ENCODE measurements at regions of chr5 and their contacts with region 1.

Region 1: DNA sequence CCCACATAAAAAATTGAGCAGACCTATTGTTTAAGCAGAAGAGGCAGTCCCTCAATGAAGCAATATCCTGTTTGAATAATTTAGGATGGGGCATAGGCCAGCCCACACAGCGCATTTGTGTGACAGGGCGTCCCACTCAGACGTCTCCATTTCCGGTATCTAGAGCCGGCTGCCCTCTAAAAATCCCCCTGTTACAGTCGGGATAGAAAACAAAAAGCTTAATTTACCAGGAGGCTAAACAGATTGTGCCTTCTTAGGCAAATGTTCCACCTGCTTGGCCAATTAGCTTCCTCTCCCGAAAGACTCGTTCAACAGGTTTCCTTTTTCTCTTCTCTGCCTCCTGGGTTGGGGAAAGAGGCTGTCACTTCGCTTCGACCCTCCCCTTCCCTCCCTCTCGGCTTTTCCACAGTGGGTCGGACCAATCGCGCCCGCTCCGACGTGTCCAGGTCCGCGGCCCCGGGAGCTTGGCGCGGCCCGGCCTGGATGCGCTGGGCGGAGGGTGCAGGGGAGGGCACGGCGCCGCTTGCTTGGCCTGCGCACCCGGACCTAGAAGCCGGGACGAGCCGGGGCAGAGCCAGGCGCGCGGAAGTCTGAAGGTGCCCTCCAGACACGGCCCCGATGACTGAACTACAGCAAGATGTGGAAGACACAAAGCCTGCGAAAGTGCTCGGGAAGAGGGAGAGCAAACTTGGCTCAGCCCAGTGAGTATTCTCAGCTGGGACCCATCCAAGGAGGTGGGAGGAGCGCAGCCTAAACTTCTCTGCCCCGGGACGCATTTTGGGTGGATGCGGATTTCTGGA is at the start of gene GRAMD2B:
- DNase-seq: peak; percentile 27 to 80 (median 76)
- ATAC-seq: peak; percentile 96
- H3K4me3 ChIP-seq: peak within 1 kb of the TSS; percentile 78
- H3K4me3 Mint-ChIP-seq: peak within 1 kb of the TSS; percentile 85 to 94 (median 94)
- H3K27ac ChIP-seq: peak within 1 kb of the TSS; percentile 100
- H3K27ac Mint-ChIP-seq: peak within 1 kb of the TSS; percentile 85 to 96 (median 95)
- H3K4me1 ChIP-seq: peaks cover 8 to 13% of the 10 kb centered on the region in 2 donors
- H3K4me1 Mint-ChIP-seq: peaks cover 22 to 42% (median 33%) of the 10 kb centered on the region in 7 donors
- H3K27me3 ChIP-seq: no peaks in the 10 kb centered on the region
- H3K27me3 Mint-ChIP-seq: no peaks in the 10 kb centered on the region
- total RNA-seq, gene GRAMD2B: 5.2 to 9.6 (median 7.1) TPM

Region 2: DNA sequence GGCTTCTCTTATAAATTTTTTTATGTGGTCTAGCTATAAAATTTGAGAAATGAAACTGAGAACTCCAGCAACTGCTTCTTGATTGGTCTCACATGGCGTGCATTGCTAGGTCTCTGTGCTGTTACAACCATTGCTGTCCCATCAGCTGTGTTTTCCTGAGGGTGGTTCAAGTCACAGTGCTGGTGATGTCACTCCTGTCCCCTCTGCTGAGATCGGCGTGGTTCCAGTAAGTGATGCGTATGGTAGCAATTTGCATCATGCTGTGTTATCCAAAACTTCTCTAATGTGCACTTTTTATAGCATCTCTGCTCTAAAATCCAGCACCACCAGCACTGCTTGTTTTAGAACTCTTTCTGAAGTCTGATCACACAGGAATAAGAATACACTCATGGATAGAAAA is 1564.2 kb before region 1 on chr5:
- CTCF ChIA-PET with region 1: no interaction called
- POLR2A ChIA-PET with region 1: no interaction called
- intact Hi-C with region 1: no loop called
- DNase-seq: no peak
- ATAC-seq: peak; percentile 53
- H3K4me3 ChIP-seq: no peak overlapping the region
- H3K4me3 Mint-ChIP-seq: no peak overlapping the region
- H3K27ac ChIP-seq: no peak overlapping the region
- H3K27ac Mint-ChIP-seq: no peak overlapping the region
- H3K4me1 ChIP-seq: no peaks in the 10 kb centered on the region
- H3K4me1 Mint-ChIP-seq: no peaks in the 10 kb centered on the region
- H3K27me3 ChIP-seq: no peaks in the 10 kb centered on the region
- H3K27me3 Mint-ChIP-seq: peaks cover 0 to 8% (median 7%) of the 10 kb centered on the region in 5 donors

Region 3: GRCh38 chr5:126354012-126354857 is 69.0 kb before region 1 on chr5:
- CTCF ChIA-PET with region 1: interaction called, 4 read pairs
- POLR2A ChIA-PET with region 1: no interaction called
- intact Hi-C with region 1: loop called in 1 of 2 experiments (anchors 2 kb)
- DNase-seq: peak in 7 of 9 donors; percentile 26 to 66 (median 53)
- ATAC-seq: peak; percentile 78
- H3K4me3 ChIP-seq: no peak overlapping the region
- H3K4me3 Mint-ChIP-seq: peak overlapping the region; percentile 12 to 80 (median 72)
- H3K27ac ChIP-seq: no peak overlapping the region
- H3K27ac Mint-ChIP-seq: peak overlapping the region in 7 of 9 donors; percentile 19 to 65 (median 36)
- H3K4me1 ChIP-seq: peaks cover 0 to 12% of the 10 kb centered on the region in 2 donors
- H3K4me1 Mint-ChIP-seq: peaks cover 3 to 21% (median 15%) of the 10 kb centered on the region in 7 donors
- H3K27me3 ChIP-seq: no peaks in the 10 kb centered on the region
- H3K27me3 Mint-ChIP-seq: peaks cover 0 to 16% (median 0%) of the 10 kb centered on the region in 5 donors

Region 4: GRCh38 chr5:126462239-126463014 is 39.2 kb after region 1 on chr5:
- CTCF ChIA-PET with region 1: no interaction called
- POLR2A ChIA-PET with region 1: interaction called, 3 read pairs
- intact Hi-C with region 1: loop called (anchors 5 kb)
- DNase-seq: no peak
- ATAC-seq: no peak
- H3K4me3 ChIP-seq: no peak overlapping the region
- H3K4me3 Mint-ChIP-seq: no peak overlapping the region
- H3K27ac ChIP-seq: no peak overlapping the region
- H3K27ac Mint-ChIP-seq: peak overlapping the region in 6 of 9 donors; percentile 0 to 88 (median 68)
- H3K4me1 ChIP-seq: peaks cover 0 to 12% of the 10 kb centered on the region in 2 donors
- H3K4me1 Mint-ChIP-seq: peaks cover 6 to 49% (median 34%) of the 10 kb centered on the region in 7 donors
- H3K27me3 ChIP-seq: no peaks in the 10 kb centered on the region
- H3K27me3 Mint-ChIP-seq: no peaks in the 10 kb centered on the region

Region 5: DNA sequence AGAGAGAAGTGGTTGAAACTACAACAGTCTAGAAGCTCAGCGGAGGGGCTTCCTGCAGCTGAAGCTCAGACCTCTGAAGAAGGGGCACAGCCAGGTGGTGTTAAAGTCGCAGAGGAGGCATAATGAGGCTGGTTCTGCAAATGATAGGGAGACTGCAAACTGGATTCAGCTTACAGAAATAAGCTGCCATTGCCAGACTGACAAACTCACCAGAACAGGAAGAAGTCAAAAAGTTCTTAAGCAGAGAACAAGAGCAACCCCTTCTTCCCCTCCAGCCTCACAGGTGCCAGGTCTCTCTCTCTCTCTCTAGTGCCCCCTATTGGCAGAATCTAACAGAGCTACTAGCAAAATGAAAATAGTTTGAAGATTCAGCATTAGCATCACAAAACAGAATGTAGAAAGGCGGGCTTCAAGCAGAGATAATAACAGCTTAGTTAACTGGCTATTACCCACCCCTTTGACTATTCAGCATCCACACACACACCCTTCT is 76.7 kb after region 1 on chr5:
- CTCF ChIA-PET with region 1: interaction called, 6 read pairs
- POLR2A ChIA-PET with region 1: interaction called, 5 read pairs
- intact Hi-C with region 1: loop called (anchors 1 to 5 kb)
- DNase-seq: peak in 7 of 9 donors; percentile 36 to 84 (median 78)
- ATAC-seq: peak; percentile 88
- H3K4me3 ChIP-seq: no peak overlapping the region
- H3K4me3 Mint-ChIP-seq: peak overlapping the region in 5 of 10 donors; percentile 10 to 54 (median 24)
- H3K27ac ChIP-seq: no peak overlapping the region
- H3K27ac Mint-ChIP-seq: peak overlapping the region in 8 of 9 donors; percentile 22 to 88 (median 76)
- H3K4me1 ChIP-seq: peaks cover 0 to 25% of the 10 kb centered on the region in 2 donors
- H3K4me1 Mint-ChIP-seq: peaks cover 4 to 58% (median 44%) of the 10 kb centered on the region in 7 donors
- H3K27me3 ChIP-seq: no peaks in the 10 kb centered on the region
- H3K27me3 Mint-ChIP-seq: no peaks in the 10 kb centered on the region

Region 6: GRCh38 chr5:126536874-126537273 is 113.7 kb after region 1 on chr5:
- CTCF ChIA-PET with region 1: interaction called, 3 read pairs
- POLR2A ChIA-PET with region 1: interaction called, 3 read pairs
- intact Hi-C with region 1: loop called in 1 of 2 experiments (anchors 2 kb)
- DNase-seq: no peak
- ATAC-seq: no peak
- H3K4me3 ChIP-seq: no peak overlapping the region
- H3K4me3 Mint-ChIP-seq: no peak overlapping the region
- H3K27ac ChIP-seq: no peak overlapping the region
- H3K27ac Mint-ChIP-seq: no peak overlapping the region
- H3K4me1 ChIP-seq: no peaks in the 10 kb centered on the region
- H3K4me1 Mint-ChIP-seq: peaks cover 0 to 9% (median 0%) of the 10 kb centered on the region in 7 donors
- H3K27me3 ChIP-seq: no peaks in the 10 kb centered on the region
- H3K27me3 Mint-ChIP-seq: peaks cover 0 to 6% (median 0%) of the 10 kb centered on the region in 5 donors

Region 7: DNA sequence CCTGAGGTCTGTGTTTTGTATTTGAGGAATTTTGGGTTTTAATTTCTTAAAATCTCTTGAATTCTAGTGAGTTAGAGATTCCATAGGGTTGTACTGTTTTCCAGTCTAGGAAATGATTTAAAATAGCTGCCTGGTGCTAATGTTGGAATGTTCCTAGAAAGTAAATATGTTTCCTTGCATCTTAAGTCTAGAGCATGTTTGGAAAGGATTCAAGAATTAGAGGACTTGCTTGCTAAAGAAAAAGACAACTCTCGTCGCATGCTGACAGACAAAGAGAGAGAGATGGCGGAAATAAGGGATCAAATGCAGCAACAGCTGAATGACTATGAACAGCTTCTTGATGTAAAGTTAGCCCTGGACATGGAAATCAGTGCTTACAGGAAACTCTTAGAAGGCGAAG is 395.5 kb after region 1 on chr5:
- CTCF ChIA-PET with region 1: no interaction called
- POLR2A ChIA-PET with region 1: no interaction called
- intact Hi-C with region 1: no loop called
- DNase-seq: no peak
- ATAC-seq: no peak
- H3K4me3 ChIP-seq: no peak overlapping the region
- H3K4me3 Mint-ChIP-seq: no peak overlapping the region
- H3K27ac ChIP-seq: no peak overlapping the region
- H3K27ac Mint-ChIP-seq: no peak overlapping the region
- H3K4me1 ChIP-seq: no peaks in the 10 kb centered on the region
- H3K4me1 Mint-ChIP-seq: peaks cover 0 to 37% (median 0%) of the 10 kb centered on the region in 7 donors
- H3K27me3 ChIP-seq: no peaks in the 10 kb centered on the region
- H3K27me3 Mint-ChIP-seq: no peaks in the 10 kb centered on the region

Measured in naive thymus-derived CD4-positive, alpha-beta T cell (primary cell).